ENCODE measurements at regions of chr22 and their contacts with region 1.

Region 1: GRCh38 chr22:28772633-28773460 is at the start of gene CCDC117:
- DNase-seq: peak; percentile 90
- H3K4me3 Mint-ChIP-seq: peak within 1 kb of the TSS; percentile 100
- H3K27ac Mint-ChIP-seq: peak within 1 kb of the TSS; percentile 100
- H3K4me1 Mint-ChIP-seq: peaks cover 22% of the 10 kb centered on the region
- H3K27me3 Mint-ChIP-seq: peaks cover 4% of the 10 kb centered on the region
- total RNA-seq, gene CCDC117: 46.4 and 52.8 TPM in 2 replicates

Region 2: DNA sequence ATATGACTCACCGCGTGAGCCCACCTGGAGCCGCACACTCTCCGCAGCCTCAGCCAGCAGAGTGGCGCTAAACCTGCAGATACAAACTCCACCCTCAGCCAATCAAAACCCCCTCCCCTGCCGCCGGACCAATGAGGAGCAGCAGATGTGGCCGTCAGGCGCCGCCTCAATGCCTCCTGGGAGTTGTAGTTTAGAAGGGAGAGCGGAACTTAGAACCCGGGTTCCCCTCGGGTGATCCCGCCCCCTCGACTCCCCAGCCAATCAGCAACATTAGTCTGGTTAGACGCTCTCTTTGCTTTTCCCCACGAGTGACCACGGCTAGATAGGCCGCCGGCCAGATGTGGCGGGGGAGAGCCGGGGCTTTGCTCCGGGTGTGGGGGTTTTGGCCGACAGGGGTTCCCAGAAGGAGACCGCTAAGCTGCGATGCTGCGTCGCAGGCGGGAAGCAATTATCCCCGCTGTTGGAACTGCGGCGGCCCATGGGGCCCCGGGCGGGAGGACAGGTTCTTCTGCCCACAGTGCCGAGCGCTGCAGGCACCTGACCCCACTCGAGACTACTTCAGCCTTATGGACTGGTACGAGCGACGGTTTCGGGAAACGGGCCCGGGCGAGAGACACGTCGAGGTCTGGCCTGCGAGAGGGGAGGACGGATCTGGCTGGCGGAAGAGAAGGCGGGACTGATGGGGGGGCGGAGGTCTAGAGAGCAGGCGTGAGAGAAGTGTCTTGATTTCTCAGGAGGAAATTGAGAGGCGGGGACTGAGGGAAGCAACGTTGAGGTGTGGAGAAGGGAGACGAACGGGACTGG is 30.9 kb before region 1 on chr22 and contains the starts of genes CHEK2 and HSCB:
- intact Hi-C with region 1: loop called (anchors 1 kb)
- DNase-seq: peak; percentile 97
- H3K4me3 Mint-ChIP-seq: peak within 1 kb of the TSS; percentile 86
- H3K27ac Mint-ChIP-seq: peak within 1 kb of the TSS; percentile 70
- H3K4me1 Mint-ChIP-seq: peaks cover 42% of the 10 kb centered on the region
- H3K27me3 Mint-ChIP-seq: no peaks in the 10 kb centered on the region
- total RNA-seq, gene CHEK2: 31.4 and 35.0 TPM in 2 replicates
- total RNA-seq, gene HSCB: 16.6 and 18.0 TPM in 2 replicates

Region 3: GRCh38 chr22:28810821-28811491 is 38.1 kb after region 1 on chr22:
- intact Hi-C with region 1: loop called (anchors 1 kb)
- DNase-seq: peak; percentile 60
- H3K4me3 Mint-ChIP-seq: peak overlapping the region; percentile 76
- H3K27ac Mint-ChIP-seq: peak overlapping the region; percentile 89
- H3K4me1 Mint-ChIP-seq: peaks cover 81% of the 10 kb centered on the region
- H3K27me3 Mint-ChIP-seq: no peaks in the 10 kb centered on the region

Region 4: DNA sequence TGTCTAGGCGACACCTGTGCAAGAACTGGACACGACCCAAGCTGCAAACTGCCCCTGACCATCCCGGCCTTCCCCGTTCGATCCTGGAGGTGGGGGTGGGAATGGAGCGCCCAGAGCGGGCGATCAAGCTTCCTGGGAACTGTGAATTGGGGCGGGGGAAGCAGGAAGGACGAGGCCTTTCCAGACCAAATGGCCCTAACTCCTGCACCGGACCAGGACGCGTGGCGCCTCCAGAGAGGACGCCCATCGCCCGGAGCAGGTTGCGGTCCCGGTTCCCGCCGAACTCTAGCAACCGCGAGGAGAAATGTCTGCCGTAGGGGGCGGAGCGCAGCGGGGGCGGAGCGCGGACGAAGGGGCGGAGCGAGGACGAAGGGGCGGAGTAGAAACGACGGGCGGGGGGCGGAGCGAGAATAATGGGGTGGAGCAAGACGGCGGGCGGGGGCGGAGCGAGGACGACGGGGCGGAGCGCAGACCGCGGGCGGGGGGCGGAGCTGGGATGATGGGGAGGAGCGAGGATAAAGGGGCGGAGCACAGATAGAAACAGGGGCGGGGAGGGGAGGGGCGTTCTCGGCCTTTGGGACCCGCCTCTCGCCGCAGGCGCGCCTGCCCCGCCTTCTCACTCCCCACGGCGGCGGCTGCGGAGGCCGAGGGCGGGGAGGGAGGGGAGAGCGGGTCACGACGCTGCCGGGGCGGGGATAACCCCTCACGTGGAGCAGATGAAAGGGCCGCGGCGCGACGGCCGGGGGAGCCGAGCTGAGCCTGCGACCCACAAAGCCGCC is 110.2 kb after region 1 on chr22 and contains the start of gene ZNRF3:
- intact Hi-C with region 1: loop called (anchors 1 kb)
- DNase-seq: peak; percentile 78
- H3K4me3 Mint-ChIP-seq: peak within 1 kb of the TSS; percentile 79
- H3K27ac Mint-ChIP-seq: no peak within 1 kb of the TSS
- H3K4me1 Mint-ChIP-seq: peaks cover 14% of the 10 kb centered on the region
- H3K27me3 Mint-ChIP-seq: peaks cover 67% of the 10 kb centered on the region
- total RNA-seq, gene ZNRF3: 1.9 and 2.1 TPM in 2 replicates

Region 5: DNA sequence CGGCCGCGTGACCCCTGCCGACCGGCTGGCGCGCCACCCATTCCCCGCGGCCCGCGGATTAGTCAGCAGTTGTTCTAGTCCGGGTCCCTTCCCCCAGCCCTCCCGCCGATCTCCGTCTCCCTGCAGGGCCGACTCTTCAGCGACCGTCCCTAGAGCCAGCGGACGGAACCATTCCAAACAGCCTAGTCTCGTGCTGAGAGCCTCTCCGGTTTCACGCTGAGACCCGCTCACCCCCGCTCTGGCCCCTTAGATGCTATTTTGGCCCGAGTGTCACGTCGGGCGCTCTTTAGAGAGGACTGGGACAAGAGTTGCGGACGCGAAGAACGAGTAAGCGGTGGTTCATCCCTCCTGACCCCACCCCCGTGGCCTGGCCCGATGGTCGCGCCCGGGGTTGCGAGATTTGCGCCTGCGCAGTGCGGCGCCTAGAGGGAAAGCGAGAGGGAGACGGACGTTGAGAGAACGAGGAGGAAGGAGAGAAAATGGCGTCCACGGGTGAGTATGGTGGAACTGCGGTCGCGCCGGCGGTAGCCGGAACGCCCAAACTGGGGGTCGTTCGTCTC is 495.1 kb after region 1 on chr22 and contains the starts of genes EWSR1 and RHBDD3:
- intact Hi-C with region 1: loop called (anchors 2 kb)
- DNase-seq: peak; percentile 97
- H3K4me3 Mint-ChIP-seq: peak within 1 kb of the TSS; percentile 96
- H3K27ac Mint-ChIP-seq: peak within 1 kb of the TSS; percentile 99
- H3K4me1 Mint-ChIP-seq: peaks cover 49% of the 10 kb centered on the region
- H3K27me3 Mint-ChIP-seq: no peaks in the 10 kb centered on the region
- total RNA-seq, gene EWSR1: 454 and 463 TPM in 2 replicates
- total RNA-seq, gene RHBDD3: 53.3 and 59.4 TPM in 2 replicates

Measured in activated T-helper 1 cell treated with anti-CD3 and anti-CD28 coated beads, Interleukin-12 subunit alpha, Interleukin-12 subunit beta, Interleukin-2, Interleukin-4 antibody, amounts not matched to agents 30 ng/mL and 10 ng/mL and 1 ng/mL, durations not matched to agents 14 hours and 24 hours and 36 hours (primary cell).